Left ventricle myocardium inferior (tissue), 1 donor: ENCODE measurements at regions of chr3 and their contacts with region 1.

Region 1: GRCh38 chr3:62131592-62131991 is 241.8 kb downstream of the FEZF2 start:
- DNase-seq: no peak
- H3K4me3 ChIP-seq: no peak overlapping the region
- H3K27ac ChIP-seq: no peak overlapping the region
- H3K4me1 ChIP-seq: peaks cover 41% of the 10 kb centered on the region
- H3K27me3 ChIP-seq: no peaks in the 10 kb centered on the region
- CTCF ChIP-seq: peak; percentile 61

Region 2: GRCh38 chr3:61927332-61927731 is 204.3 kb before region 1 on chr3:
- intact Hi-C with region 1: loop called (anchors 10 kb)
- DNase-seq: peak; percentile 83
- H3K4me3 ChIP-seq: peak overlapping the region; percentile 35
- H3K27ac ChIP-seq: peak overlapping the region; percentile 88
- H3K4me1 ChIP-seq: peaks cover 76% of the 10 kb centered on the region
- H3K27me3 ChIP-seq: no peaks in the 10 kb centered on the region
- CTCF ChIP-seq: no peak

Region 3: DNA sequence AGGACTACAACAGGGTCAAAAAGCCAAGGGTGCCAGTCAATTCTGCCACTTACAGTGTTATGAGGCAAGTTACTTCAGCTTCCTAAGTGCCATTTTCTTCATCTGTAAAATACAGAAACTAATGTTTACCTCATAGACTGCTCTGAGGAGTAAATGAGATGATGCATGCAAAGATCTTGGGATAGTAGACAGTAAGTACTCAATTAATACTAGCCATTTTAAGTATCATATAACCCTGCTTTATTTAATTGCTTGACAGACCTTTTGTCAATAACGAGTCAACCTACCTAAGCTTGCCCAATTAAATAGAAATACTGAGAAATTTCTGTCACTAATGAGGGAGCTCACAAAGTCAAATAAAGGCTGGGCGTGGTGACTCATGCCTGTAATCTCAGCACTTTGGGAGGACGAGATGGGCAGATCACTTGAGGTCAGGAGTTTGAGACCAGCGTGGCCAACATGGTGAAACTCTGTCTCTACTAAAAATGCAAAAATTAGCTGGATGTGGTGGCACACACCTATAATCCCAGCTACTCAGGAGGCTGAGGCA is 168.3 kb after region 1 on chr3:
- intact Hi-C with region 1: no loop called
- DNase-seq: no peak
- H3K4me3 ChIP-seq: no peak overlapping the region
- H3K27ac ChIP-seq: no peak overlapping the region
- H3K4me1 ChIP-seq: peaks cover 6% of the 10 kb centered on the region
- H3K27me3 ChIP-seq: no peaks in the 10 kb centered on the region
- CTCF ChIP-seq: no peak

Region 4: GRCh38 chr3:62368705-62369475 is 237.3 kb after region 1 on chr3:
- intact Hi-C with region 1: no loop called
- DNase-seq: no peak
- H3K4me3 ChIP-seq: peak overlapping the region; percentile 47
- H3K27ac ChIP-seq: no peak overlapping the region
- H3K4me1 ChIP-seq: peaks cover 59% of the 10 kb centered on the region
- H3K27me3 ChIP-seq: peaks cover 100% of the 10 kb centered on the region
- CTCF ChIP-seq: peak; percentile 27